PC-9 (cell line): ENCODE measurements at regions of chr7 and their contacts with region 1.

Region 1: GRCh38 chr7:80134536-80135320 is at the start of gene GNAI1:
- DNase-seq: peak; percentile 76 to 87
- H3K4me3 ChIP-seq: peak within 1 kb of the TSS; percentile 97
- H3K27ac ChIP-seq: peak within 1 kb of the TSS; percentile 69
- H3K4me1 ChIP-seq: peaks cover 16% of the 10 kb centered on the region
- H3K27me3 ChIP-seq: no peaks in the 10 kb centered on the region
- CTCF ChIP-seq: no peak; the same call in 1 of the 2 replicates
- total RNA-seq, gene GNAI1: 16.8 and 25.6 TPM in 2 replicates

Region 2: DNA sequence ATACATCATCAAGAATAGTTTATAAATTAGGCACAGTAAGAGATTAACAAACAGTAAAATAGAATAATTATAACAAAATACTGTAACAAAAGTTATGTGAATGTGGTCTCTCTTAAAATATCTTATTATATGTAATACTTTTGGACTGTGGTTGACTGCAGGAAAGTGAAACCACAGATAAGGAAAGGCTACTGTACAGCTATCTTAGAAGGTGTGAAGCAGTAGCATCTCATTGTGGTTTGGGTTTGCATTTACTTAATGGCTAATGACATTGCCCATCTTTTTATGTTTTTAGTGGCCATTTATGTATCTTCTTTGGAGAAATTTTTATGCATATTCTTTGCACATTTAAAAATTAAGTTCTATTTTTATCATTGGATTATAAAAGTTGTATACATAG is 384.9 kb before region 1 on chr7:
- CTCF ChIA-PET with region 1: no interaction called
- POLR2A ChIA-PET with region 1: no interaction called
- intact Hi-C with region 1: no loop called
- DNase-seq: no peak
- H3K4me3 ChIP-seq: no peak overlapping the region
- H3K27ac ChIP-seq: no peak overlapping the region
- H3K4me1 ChIP-seq: no peaks in the 10 kb centered on the region
- H3K27me3 ChIP-seq: no peaks in the 10 kb centered on the region
- CTCF ChIP-seq: no peak

Region 3: DNA sequence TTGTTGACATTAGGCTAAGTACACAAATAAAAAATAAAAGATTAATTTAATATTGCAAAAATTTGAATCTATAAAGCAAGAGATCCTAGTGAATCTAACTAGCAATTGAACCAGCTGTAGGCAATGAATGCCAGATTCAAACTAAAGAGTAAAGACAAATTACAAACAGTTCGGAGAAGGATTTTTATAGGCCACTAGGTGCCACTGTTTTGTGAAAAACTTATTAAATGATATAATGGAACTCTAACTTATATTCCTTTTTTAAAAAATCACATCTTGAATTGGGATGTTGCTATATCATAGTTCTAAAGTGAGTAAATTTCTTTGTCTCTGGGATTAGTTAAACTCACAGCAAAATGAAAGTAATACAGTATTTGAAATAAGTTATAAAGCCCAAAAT is 39.2 kb before region 1 on chr7:
- CTCF ChIA-PET with region 1: interaction called, 4 read pairs
- POLR2A ChIA-PET with region 1: interaction called, 17 read pairs
- intact Hi-C with region 1: loop called (anchors 5 kb)
- DNase-seq: no peak
- H3K4me3 ChIP-seq: no peak overlapping the region
- H3K27ac ChIP-seq: no peak overlapping the region
- H3K4me1 ChIP-seq: peaks cover 8% of the 10 kb centered on the region
- H3K27me3 ChIP-seq: no peaks in the 10 kb centered on the region
- CTCF ChIP-seq: peak; percentile 66

Region 4: DNA sequence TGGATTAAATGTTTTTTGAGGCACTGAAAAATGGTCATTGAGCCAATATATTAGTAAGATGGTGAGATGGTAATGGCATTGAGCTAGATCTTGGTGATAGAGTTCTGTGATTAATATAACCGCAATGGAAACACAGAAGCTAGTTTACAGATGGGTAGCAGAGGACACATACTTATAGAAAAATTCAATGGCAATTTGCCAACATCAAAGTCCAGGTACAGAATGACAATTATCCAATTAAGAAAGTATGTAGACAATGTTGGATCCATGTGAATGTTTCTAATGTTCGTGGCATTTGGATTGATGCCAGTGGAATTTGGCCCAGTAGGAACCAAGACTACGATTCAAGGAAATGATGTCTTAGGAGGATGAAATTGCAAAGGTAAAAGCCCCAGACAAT is 189.3 kb after region 1 on chr7:
- CTCF ChIA-PET with region 1: no interaction called
- POLR2A ChIA-PET with region 1: no interaction called
- intact Hi-C with region 1: loop called (anchors 10 kb)
- DNase-seq: peak; percentile 59 to 74
- H3K4me3 ChIP-seq: no peak overlapping the region
- H3K27ac ChIP-seq: no peak overlapping the region
- H3K4me1 ChIP-seq: no peaks in the 10 kb centered on the region
- H3K27me3 ChIP-seq: no peaks in the 10 kb centered on the region
- CTCF ChIP-seq: no peak

Region 5: DNA sequence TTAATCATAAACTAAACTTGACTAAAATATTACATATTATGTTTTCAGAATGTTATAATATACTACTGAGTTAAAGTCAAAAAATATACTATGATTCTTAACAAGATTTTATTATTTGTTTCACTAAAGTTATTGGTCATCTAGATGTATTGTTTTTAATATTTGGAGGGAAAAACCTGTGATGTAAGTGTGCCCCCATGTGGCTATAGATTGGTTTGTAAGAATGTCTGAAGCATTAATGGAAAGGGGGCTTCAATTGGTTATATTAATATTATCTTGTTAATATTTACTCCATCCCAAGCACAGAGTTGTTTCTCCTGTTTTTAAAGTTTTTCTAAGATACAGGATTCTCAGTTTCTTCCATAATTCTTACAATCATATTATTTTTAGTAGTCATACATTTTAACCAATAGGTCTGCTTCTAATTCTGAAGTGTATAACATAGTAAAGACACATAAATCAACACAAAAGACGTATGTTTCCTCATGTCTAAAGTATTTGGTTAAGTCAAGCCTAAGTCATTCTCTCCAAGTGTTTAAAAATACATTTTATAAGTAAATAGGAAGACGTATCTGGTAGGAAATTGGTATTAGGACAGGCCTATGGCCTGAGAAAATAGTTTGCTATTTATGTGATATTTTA is 319.1 kb after region 1 on chr7:
- CTCF ChIA-PET with region 1: no interaction called
- POLR2A ChIA-PET with region 1: no interaction called
- intact Hi-C with region 1: loop called (anchors 10 kb)
- DNase-seq: no peak
- H3K4me3 ChIP-seq: no peak overlapping the region
- H3K27ac ChIP-seq: no peak overlapping the region
- H3K4me1 ChIP-seq: no peaks in the 10 kb centered on the region; the same call in 1 of the 2 replicates
- H3K27me3 ChIP-seq: no peaks in the 10 kb centered on the region
- CTCF ChIP-seq: peak; percentile 73

Region 6: DNA sequence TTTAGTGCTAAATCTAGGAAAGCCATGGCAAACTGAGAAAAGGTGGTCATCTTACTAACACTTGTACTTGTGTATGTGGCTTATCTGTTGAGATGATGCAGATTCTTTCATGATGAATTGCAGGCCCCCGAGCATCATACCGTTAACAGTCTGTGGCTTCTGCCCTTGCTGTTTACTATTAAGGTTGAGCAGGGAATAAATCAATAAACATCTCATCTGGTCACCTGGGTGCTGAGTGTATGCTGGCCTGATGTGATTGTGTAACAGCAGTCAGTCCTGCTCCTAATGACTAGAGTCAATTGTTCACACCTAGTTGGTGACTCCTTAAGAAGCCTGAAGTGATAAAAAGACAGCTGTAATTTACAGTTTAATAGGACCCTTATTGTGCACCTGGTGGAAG is 385.5 kb after region 1 on chr7:
- CTCF ChIA-PET with region 1: no interaction called
- POLR2A ChIA-PET with region 1: no interaction called
- intact Hi-C with region 1: no loop called
- DNase-seq: peak in 1 of 2 experiments; percentile 81
- H3K4me3 ChIP-seq: no peak overlapping the region
- H3K27ac ChIP-seq: no peak overlapping the region
- H3K4me1 ChIP-seq: peaks cover 13% of the 10 kb centered on the region
- H3K27me3 ChIP-seq: no peaks in the 10 kb centered on the region
- CTCF ChIP-seq: no peak

Region 7: GRCh38 chr7:80659120-80660055 is 524.7 kb after region 1 on chr7:
- CTCF ChIA-PET with region 1: interaction called, 3 read pairs
- POLR2A ChIA-PET with region 1: no interaction called
- intact Hi-C with region 1: loop called (anchors 5 kb)
- DNase-seq: no peak
- H3K4me3 ChIP-seq: no peak overlapping the region
- H3K27ac ChIP-seq: no peak overlapping the region
- H3K4me1 ChIP-seq: no peaks in the 10 kb centered on the region
- H3K27me3 ChIP-seq: no peaks in the 10 kb centered on the region
- CTCF ChIP-seq: peak; percentile 96

Region 8: DNA sequence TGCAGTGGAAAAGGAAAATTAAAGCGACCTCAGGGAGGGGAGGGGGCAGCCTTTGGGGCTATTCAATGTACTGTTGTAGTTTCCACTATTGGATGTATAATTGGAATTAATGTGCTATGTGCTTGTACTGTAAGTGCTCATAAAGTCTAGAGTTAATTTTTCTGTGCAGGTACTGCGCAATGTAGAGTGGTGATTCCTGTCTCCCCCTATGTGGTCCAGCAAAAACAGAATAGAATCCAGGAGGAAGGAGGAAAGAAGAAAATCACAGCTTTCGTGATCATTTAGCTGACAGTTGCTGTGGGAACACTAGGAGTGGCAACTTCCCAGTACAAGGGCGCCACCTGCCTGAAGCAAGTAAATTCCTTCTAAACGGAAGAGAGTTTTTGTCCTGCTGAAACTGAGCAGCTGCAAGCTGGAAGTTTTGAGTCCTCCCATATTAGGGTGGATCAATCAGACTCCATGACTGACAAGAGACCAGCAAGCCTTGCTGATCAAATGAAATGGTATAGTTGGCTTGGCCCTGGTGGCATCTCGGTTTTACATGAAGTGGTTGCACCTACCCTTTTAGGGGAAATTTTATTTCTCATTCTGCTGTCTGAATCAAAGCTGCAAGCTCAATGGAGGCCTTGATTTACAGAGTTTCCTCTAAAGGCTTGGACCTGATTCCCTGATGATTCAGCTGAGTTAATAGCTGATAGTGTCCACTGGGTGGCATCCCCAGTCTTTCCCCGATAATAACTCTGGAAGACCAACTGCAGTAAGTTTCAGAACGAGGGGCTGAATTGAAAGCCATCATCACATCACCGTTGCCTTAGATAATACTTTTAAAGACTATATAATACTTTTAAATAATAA is 1335.4 kb after region 1 on chr7:
- CTCF ChIA-PET with region 1: interaction called, 10 read pairs
- POLR2A ChIA-PET with region 1: no interaction called
- intact Hi-C with region 1: no loop called
- DNase-seq: peak; percentile 50 to 65
- H3K4me3 ChIP-seq: no peak overlapping the region
- H3K27ac ChIP-seq: no peak overlapping the region
- H3K4me1 ChIP-seq: no peaks in the 10 kb centered on the region
- H3K27me3 ChIP-seq: no peaks in the 10 kb centered on the region
- CTCF ChIP-seq: peak; percentile 81